PC-9 (cell line): ENCODE measurements at regions of chr6 and their contacts with region 1.

Region 1: DNA sequence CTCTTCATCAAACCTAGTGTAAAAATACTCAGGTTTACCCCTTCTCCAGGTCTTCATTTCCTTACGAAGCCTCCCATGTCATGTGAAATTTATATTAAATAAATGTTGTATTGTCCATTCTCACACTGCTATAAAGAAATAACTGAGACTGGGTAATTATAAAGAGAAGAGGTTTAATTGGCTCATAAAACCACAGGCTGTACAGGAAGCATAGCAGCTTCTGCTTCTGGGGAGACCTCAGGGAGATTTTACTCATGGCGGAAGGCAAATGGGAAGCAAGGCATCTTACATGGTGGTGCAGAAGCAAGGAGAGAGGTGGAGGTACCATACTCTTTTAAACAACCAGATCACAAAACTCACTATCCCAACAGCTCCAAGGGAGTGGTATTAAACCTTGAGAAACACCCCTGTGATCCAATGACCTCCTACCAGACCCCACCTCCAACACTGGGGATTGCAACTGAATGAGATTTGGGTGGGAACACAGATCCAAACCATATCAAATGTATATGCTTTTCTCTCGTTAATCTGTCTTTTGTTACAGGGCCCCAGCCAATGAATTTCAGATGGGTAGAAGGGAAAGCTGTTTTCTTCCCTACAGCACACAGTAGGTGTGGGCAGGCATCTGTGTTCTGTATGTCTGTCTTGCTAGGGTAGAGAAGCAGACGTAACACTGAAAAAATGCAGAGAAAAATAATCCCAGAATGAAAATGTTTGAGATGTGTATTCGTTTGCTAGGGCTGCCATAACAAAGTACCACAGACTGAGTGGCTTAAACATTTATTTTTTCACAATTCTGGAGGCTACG is 88.0 kb upstream of the BTN3A2 start:
- DNase-seq: no peak
- H3K4me3 ChIP-seq: no peak overlapping the region
- H3K27ac ChIP-seq: no peak overlapping the region
- H3K4me1 ChIP-seq: 0 out of 2 replicates have a peak, but pooled peaks cover 11% of the 10 kb centered on the region
- H3K27me3 ChIP-seq: no peaks in the 10 kb centered on the region
- CTCF ChIP-seq: no peak

Region 2: GRCh38 chr6:25821341-25821740 is 455.7 kb before region 1 on chr6:
- CTCF ChIA-PET with region 1: interaction called, 14 read pairs
- POLR2A ChIA-PET with region 1: no interaction called
- intact Hi-C with region 1: no loop called
- DNase-seq: no peak
- H3K4me3 ChIP-seq: no peak overlapping the region
- H3K27ac ChIP-seq: no peak overlapping the region
- H3K4me1 ChIP-seq: no peaks in the 10 kb centered on the region
- H3K27me3 ChIP-seq: no peaks in the 10 kb centered on the region
- CTCF ChIP-seq: no peak

Region 3: GRCh38 chr6:26003102-26003694 is 273.8 kb before region 1 on chr6:
- CTCF ChIA-PET with region 1: no interaction called
- POLR2A ChIA-PET with region 1: no interaction called
- intact Hi-C with region 1: no loop called
- DNase-seq: peak in 1 of 2 experiments; percentile 61
- H3K4me3 ChIP-seq: no peak overlapping the region
- H3K27ac ChIP-seq: no peak overlapping the region
- H3K4me1 ChIP-seq: no peaks in the 10 kb centered on the region
- H3K27me3 ChIP-seq: no peaks in the 10 kb centered on the region
- CTCF ChIP-seq: peak; percentile 87

Region 4: DNA sequence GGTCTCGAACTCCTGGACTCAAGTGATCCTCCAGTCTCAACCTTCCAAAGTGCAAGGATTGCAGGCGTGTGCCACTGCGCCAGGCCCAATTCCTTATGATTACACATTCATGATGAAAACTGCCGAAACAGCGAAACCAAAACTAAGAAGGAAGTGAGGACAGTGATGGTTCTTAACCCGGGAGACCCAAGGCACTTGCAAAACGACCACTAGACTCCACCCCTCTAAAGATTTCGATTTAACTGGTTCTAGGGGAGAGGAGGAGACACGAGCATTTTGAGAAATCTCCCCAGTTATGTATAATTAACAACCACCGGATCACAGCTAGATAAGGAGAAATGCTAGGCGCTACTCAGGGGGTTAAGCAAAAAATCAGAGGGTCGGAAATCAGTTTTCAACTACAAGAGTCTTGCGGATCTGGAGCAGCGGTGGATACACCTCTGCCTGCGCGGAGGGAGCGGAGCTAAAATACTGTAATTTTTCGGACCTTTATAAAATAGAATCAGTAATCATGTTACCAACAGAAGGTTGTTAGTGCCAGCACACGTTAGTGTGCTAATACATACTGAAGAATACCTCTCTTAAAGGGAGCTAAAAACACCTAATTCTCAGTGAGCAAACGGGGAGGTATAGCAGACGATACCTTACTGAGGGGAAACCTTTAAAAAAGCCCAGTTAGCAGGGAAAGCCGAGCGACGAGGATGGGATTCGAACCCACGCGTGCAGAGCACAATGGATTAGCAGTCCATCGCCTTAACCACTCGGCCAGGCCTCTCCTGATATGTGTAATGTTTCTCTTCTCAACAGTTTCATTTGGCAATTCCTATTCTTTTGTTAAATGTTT is 28.0 kb after region 1 on chr6:
- CTCF ChIA-PET with region 1: no interaction called
- POLR2A ChIA-PET with region 1: no interaction called
- intact Hi-C with region 1: no loop called
- DNase-seq: peak; percentile 75 to 77
- H3K4me3 ChIP-seq: peak overlapping the region; percentile 65
- H3K27ac ChIP-seq: peak overlapping the region; percentile 96
- H3K4me1 ChIP-seq: peaks cover 19% of the 10 kb centered on the region; the same call in 1 of the 2 replicates
- H3K27me3 ChIP-seq: no peaks in the 10 kb centered on the region
- CTCF ChIP-seq: no peak